Dorsolateral prefrontal cortex (tissue), 120 donors: ENCODE measurements at regions of chr21 and their contacts with region 1.

Region 1: GRCh38 chr21:33229784-33230544 is at the start of gene IFNAR2:
- DNase-seq: peak; percentile 36 to 87 (median 74)
- H3K4me3 ChIP-seq: peak within 1 kb of the TSS; percentile 67 to 100 (median 96)
- H3K27ac ChIP-seq: peak within 1 kb of the TSS; percentile 45 to 98 (median 94)
- H3K27me3 ChIP-seq: no peaks in the 10 kb centered on the region
- CTCF ChIP-seq: peak in 3 of 56 donors; percentile 4 to 7 (median 5)
- total RNA-seq, gene IFNAR2: 14.8 to 40.5 (median 23.4) TPM

Region 2: DNA sequence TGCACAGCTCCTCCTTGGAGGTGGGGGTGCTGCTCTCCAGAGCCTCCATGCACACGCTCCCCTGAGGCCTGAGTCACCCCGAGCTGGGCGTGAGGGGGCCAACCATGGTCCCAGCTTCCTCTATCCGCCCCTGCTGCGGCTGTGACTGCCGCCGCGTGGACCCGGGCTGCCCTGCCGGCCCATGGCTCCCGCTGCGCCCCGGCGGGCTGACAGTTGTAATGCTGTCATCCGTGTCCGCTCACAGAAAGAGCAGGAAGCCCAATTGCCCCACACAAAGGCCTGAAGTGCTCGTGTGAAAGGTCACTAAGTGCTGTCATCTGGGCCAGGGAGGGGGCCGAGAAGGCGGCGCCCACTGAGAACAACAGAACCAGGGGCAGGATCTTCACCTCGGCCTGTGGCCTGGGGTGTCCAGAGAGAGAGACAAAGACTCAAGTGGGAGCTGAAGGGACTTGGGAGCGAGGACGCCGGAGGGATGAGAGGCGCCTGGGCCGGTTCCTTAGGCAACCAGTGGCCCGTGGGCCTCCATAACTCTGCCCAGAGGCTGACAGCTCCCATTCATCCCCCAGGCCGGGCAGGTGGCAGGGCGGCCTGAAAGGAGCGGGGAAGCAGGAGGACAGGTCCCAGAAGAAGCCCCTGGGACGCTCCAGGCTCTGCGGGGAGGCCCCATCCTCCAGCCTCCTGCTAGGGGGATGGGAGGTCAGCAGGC is 128.5 kb before region 1 on chr21:
- intact Hi-C with region 1: no loop called
- DNase-seq: no peak
- H3K4me3 ChIP-seq: no peak overlapping the region
- H3K27ac ChIP-seq: no peak overlapping the region
- H3K27me3 ChIP-seq: peaks cover 0 to 18% (median 0%) of the 10 kb centered on the region in 45 donors
- CTCF ChIP-seq: no peak

Region 3: DNA sequence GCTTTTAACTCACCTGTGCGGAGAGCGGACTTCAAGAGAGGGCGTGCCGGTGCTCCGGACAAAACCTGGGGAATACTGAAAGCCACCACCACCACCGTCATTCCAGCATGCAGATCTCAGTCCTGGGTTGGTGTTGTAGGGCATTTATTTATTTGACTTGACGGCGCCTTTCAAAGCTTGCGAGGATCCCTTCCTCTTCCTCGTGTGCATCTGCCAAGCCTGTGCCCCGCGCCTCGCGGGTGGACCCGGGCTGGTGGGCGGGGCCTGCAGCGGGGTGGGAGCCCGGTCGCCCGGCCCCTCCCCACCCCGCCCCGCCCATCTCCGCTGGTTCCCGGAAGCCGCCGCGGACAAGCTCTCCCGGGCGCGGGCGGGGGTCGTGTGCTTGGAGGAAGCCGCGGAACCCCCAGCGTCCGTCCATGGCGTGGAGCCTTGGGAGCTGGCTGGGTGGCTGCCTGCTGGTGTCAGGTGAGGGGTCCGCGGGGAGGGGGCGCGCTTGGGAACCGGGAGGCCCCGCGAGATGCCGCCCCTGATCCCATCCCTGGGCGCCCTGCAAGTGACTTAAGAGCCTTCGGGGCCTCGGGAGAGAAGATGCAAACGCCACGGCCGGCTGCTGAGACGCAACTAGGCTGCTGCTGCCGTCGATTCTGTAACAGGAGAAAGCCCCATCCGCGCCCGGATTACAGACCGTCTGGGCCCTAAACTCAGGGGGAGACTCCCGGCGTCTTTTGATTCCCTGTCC is 36.3 kb after region 1 on chr21 and contains the start of gene IL10RB:
- intact Hi-C with region 1: loop called in 1 of 2 experiments (anchors 5 kb)
- DNase-seq: peak in 9 of 10 donors; percentile 17 to 74 (median 52)
- H3K4me3 ChIP-seq: peak within 1 kb of the TSS; percentile 40 to 89 (median 75)
- H3K27ac ChIP-seq: peak within 1 kb of the TSS in 55 of 59 donors; percentile 41 to 95 (median 81)
- H3K27me3 ChIP-seq: no peaks in the 10 kb centered on the region
- CTCF ChIP-seq: peak in 5 of 56 donors; percentile 3 to 17 (median 12)
- total RNA-seq, gene IL10RB: 5.8 to 19.1 (median 10.6) TPM

Region 4: DNA sequence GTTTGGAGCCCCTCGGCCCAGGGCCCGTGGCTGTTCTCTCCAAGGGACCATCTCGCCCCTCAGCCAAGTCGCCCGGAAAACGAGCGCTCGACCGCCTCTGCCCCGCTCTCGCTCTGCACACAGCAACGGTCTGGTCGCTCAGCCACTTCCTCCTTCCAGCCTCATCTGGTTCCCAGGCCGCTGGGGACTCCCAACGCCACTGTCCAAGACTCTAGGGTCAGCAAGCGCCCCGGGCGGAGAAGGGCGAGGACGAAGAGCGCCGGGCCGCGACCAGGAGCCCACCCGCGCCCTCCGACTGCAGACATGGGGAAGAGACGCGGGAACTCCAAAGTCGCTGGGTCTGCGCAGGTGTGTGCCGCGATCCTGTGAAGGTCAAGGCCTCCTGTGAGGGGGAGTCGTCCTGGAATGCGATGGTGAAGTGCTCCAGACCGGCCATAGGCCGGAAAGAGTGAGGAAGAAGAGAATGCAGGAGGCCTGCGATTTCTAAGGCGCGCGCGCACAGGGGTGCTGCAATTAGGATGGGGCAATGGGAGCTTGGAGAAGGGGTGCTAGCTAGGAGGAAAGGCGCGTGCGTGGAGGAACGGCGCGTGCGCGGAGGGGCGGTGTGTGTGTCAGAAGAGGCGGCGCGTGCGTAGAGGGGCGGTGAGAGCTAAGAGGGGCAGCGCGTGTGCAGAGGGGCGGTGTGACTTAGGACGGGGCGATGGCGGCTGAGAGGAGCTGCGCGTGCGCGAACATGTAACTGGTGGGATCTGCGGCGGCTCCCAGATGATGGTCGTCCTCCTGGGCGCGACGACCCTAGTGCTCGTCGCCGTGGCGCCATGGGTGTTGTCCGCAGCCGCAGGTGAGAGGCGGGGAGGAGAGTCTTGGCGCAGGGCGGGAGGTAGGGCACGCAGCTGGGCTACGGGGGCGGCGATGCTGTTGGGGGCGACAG is 94.6 kb after region 1 on chr21 and contains the start of gene IFNAR1:
- intact Hi-C with region 1: loop called (anchors 5 kb)
- DNase-seq: peak; percentile 93 to 97 (median 94)
- H3K4me3 ChIP-seq: peak within 1 kb of the TSS; percentile 67 to 100 (median 94)
- H3K27ac ChIP-seq: peak within 1 kb of the TSS; percentile 87 to 100 (median 98)
- H3K27me3 ChIP-seq: no peaks in the 10 kb centered on the region
- CTCF ChIP-seq: peak in 14 of 56 donors; percentile 0 to 27 (median 14)
- total RNA-seq, gene IFNAR1: 35.7 to 70.9 (median 47.8) TPM